RWPE1 (cell line): ENCODE measurements at regions of chr2 and their contacts with region 1.

Region 1: DNA sequence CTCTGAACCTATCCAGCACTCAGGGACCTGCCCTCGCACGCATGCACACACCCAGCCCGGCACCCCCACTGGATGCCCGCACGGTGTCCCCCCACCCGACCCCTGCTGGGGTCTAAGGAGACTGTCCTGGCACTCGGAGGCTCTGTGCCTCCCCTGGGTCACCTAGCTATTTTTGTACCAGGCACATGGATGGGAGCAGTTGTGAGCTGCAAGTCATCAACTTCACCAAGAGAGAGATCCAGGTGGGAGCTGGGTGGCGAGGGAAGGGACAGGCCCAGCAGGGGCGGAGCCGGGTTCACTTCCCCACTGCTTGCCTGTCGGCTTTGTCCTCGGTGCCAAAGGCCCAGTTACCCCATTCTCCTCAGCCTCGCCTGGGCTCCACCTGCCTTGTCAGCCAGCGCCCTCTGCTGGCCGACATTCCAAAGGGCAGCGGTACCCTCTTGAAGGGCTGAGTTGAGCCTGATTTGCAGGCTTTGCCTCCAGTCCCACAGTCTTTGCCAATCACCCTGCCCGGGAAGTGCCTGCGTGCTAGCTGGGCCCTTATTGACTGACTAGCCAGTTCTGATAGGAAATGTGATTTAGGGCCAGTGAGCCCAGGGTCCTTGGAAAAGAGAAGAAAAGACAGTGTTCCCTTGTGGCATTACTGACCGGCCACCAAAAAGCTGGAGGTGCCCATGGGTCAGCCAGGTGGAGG is 5.8 kb downstream of the NT5DC4 start:
- DNase-seq: peak; percentile 95
- H3K27ac ChIP-seq: peak overlapping the region; percentile 52
- CTCF ChIP-seq: peak; percentile 95

Region 2: GRCh38 chr2:112597537-112598322 is 128.9 kb before region 1 on chr2:
- CTCF ChIA-PET with region 1: interaction called, 54 read pairs
- POLR2A ChIA-PET with region 1: no interaction called
- DNase-seq: no peak
- H3K27ac ChIP-seq: no peak overlapping the region
- CTCF ChIP-seq: no peak

Region 3: DNA sequence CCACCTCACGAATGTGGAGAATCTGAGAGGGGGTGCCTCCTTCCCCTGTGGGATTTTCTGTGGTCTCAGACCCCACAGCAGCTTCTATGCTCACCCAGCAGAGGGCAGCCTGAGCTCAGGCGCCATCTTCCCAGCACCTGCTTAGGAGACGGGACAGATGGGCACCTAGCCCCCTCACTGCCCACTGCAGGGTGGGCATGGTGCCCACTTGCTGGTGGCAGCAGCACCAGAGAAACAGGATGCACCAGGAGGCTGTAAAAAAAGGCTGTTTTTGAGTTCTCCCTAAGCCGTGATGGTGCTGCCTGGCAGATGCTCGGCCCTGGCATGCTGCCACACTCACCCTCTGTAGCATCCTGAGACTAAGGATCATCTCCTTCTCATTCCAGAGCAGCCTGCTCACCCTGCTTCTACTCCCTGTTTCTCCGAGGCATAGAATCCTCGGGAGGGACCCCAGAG is 100.0 kb before region 1 on chr2:
- CTCF ChIA-PET with region 1: interaction called, 25 read pairs
- POLR2A ChIA-PET with region 1: interaction called, 4 read pairs
- DNase-seq: peak; percentile 50
- H3K27ac ChIP-seq: peak overlapping the region; percentile 99
- CTCF ChIP-seq: peak; percentile 83

Region 4: GRCh38 chr2:112674229-112674628 is 52.4 kb before region 1 on chr2:
- CTCF ChIA-PET with region 1: interaction called, 10 read pairs
- POLR2A ChIA-PET with region 1: interaction called, 14 read pairs
- DNase-seq: no peak
- H3K27ac ChIP-seq: no peak overlapping the region
- CTCF ChIP-seq: no peak